ENCODE measurements at regions of chr3 and their contacts with region 1.

Region 1: DNA sequence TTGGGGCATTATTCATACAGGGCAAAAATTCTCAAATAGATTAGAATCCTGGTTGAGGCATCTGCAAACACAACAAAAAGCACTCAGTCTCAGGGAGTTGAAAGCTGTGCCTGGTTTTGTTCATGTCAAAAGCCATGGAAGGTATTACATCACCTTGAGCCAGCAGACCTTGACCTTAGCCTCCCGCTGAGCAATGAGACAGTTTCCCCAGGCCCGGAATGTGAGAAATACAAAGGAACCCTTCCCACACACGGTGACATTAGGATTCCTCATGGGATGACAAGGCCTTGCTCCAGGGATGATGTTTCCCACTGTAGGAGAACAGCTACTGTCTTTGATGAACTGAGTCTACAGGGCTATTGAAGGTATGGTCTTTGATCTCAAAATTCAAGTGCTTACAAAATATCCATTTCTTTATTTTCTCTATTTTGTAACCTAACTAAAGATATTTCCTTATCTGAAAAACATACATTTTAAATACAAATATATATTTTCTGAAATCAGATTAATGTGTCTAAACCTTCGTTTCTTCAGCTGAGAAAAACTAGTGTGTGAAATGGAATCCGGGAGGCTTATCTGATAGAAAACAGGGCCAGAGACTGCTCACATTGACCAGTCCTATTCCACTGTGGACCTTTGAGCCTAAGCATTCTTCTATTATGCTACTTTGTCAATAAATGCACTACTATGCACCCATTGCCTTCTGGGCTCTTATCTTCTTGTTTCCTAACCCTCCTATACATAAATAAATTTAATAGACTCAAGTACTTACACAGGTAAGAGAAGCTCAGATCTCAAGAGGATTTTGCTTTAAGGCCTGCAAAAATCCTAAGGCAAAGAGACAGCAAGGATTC is 298.2 kb downstream of the KBTBD8 start:
- DNase-seq: no peak
- ATAC-seq: no peak
- H3K4me3 ChIP-seq: no peak overlapping the region
- H3K4me3 Mint-ChIP-seq: no peak overlapping the region
- H3K27ac ChIP-seq: no peak overlapping the region
- H3K27ac Mint-ChIP-seq: no peak overlapping the region
- H3K4me1 ChIP-seq: no peaks in the 10 kb centered on the region
- H3K4me1 Mint-ChIP-seq: no peaks in the 10 kb centered on the region
- H3K27me3 ChIP-seq: no peaks in the 10 kb centered on the region
- H3K27me3 Mint-ChIP-seq: no peaks in the 10 kb centered on the region
- CTCF ChIP-seq: no peak

Region 2: GRCh38 chr3:67329358-67329757 is 33.1 kb after region 1 on chr3:
- intact Hi-C with region 1: loop called (anchors 1 kb)
- DNase-seq: no peak
- ATAC-seq: no peak
- H3K4me3 ChIP-seq: no peak overlapping the region
- H3K4me3 Mint-ChIP-seq: no peak overlapping the region
- H3K27ac ChIP-seq: no peak overlapping the region
- H3K27ac Mint-ChIP-seq: no peak overlapping the region
- H3K4me1 ChIP-seq: no peaks in the 10 kb centered on the region
- H3K4me1 Mint-ChIP-seq: no peaks in the 10 kb centered on the region
- H3K27me3 ChIP-seq: no peaks in the 10 kb centered on the region
- H3K27me3 Mint-ChIP-seq: peaks cover 0 to 4% of the 10 kb centered on the region in 2 donors
- CTCF ChIP-seq: no peak